Keratinocyte (primary cell): ENCODE measurements at regions of chr1 and their contacts with region 1.

Region 1: GRCh38 chr1:147579934-147580537 is 38.7 kb downstream of the BCL9 start:
- DNase-seq: no peak
- H3K4me3 ChIP-seq: no peak overlapping the region
- H3K27ac ChIP-seq: no peak overlapping the region
- H3K4me1 ChIP-seq: no peaks in the 10 kb centered on the region
- H3K27me3 ChIP-seq: peaks cover 32% of the 10 kb centered on the region
- CTCF ChIP-seq: no peak

Region 2: GRCh38 chr1:147478556-147478955 is 101.5 kb before region 1 on chr1:
- dilution Hi-C with region 1: no loop called
- DNase-seq: no peak
- H3K4me3 ChIP-seq: no peak overlapping the region
- H3K27ac ChIP-seq: no peak overlapping the region
- H3K4me1 ChIP-seq: no peaks in the 10 kb centered on the region
- H3K27me3 ChIP-seq: no peaks in the 10 kb centered on the region
- CTCF ChIP-seq: no peak

Region 3: GRCh38 chr1:147630447-147630846 is 50.4 kb after region 1 on chr1:
- dilution Hi-C with region 1: loop called (anchors 10 kb)
- DNase-seq: no peak
- H3K4me3 ChIP-seq: no peak overlapping the region
- H3K27ac ChIP-seq: no peak overlapping the region
- H3K4me1 ChIP-seq: no peaks in the 10 kb centered on the region
- H3K27me3 ChIP-seq: no peaks in the 10 kb centered on the region
- CTCF ChIP-seq: no peak